Naive thymus-derived CD4-positive, alpha-beta T cell (primary cell): ENCODE measurements at regions of chr12 and their contacts with region 1.

Region 1: DNA sequence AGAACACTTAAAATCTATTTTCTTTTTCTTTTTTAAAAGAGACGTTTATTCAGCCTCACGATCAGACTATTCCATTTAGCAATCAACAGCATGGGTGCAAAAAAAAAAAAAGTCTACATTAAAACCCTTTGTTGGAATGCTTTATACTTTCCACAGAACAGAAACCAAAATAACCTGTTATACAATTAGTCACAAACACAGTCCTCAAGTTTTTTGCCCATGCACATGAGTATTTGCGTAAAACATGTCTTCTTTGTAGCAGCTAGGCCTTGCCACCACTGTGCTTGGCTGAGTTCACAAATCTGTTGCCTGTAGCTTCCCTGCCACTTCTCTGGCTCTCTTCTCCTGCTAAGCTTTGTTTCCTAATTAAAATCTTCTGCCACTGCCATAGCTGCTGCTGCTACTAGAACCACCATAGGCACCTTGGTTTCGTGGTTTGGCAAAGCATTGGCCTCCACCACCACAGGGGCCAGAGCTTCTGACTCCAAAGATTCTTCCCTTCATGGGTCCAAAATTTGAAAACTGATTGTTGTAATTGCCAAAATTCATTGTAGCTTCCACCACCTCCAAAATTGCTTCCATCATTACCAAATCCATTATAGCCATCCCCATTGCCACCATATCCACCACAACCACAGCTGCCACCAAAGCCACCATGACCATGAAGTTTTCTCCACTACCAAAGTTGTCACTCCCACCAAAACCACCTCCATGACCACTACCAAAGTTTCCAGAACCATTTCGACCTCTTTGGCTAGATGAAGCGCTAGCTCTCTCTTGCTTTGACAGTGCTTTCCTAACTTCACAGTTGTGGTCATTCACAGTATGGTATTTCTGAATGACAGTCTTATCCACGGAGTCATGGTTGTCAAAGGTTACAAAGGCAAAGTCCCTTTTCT is 38.1 kb downstream of the KLRG1 start:
- DNase-seq: peak in 1 of 9 donors; percentile 46
- ATAC-seq: no peak
- H3K4me3 ChIP-seq: no peak overlapping the region
- H3K4me3 Mint-ChIP-seq: peak overlapping the region; percentile 21 to 69 (median 60)
- H3K27ac ChIP-seq: peak overlapping the region; percentile 73
- H3K27ac Mint-ChIP-seq: peak overlapping the region in 3 of 9 donors; percentile 24 to 97 (median 94)
- H3K4me1 ChIP-seq: peaks cover 53 to 69% of the 10 kb centered on the region in 2 donors
- H3K4me1 Mint-ChIP-seq: peaks cover 20 to 57% (median 49%) of the 10 kb centered on the region in 7 donors
- H3K27me3 ChIP-seq: no peaks in the 10 kb centered on the region
- H3K27me3 Mint-ChIP-seq: peaks cover 0 to 2% (median 0%) of the 10 kb centered on the region in 5 donors

Region 2: DNA sequence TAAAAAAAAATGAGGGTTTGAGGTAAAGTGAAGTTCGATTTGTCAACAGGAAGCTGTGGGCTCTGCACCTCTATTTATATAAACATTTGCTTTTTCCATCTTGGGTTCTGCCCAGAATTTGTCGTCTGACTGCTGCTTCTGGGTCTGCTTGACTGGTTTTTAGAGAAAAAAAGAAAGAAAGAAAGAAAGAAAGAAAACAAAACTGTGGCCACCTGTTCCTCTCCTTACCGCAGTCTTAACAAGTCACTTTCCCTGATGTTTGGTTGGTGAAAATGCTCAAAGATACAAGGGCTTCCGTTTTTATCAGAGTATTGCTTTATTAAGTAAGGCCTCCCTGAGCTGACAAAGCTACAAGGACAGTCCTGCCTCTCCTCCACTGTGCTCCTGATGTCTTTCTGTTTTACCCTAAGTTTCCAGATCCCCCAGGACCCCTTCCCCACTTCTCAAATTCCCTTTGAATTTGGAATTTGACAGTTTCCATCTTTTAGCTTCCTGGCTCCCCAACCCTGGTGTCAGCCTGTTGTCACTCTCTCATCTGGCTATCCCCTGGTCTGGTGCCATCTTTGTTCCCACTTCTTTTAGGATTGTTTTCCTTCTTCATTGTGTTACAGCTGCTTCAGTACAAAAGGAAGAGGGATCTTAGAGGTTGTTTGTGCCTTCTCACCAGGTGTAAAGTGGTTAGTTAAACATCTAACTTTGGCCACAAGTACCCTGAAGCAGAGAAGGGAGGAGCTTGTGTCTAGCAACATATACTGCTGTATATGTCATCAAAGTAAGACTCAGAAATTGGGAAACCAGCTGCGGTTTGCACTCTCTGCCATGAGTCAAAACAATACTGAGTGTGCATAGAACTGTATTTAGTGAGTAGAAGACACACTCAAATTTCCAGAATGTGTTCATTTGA is 382.8 kb before region 1 on chr12:
- CTCF ChIA-PET with region 1: no interaction called
- POLR2A ChIA-PET with region 1: no interaction called
- intact Hi-C with region 1: loop called in 1 of 2 experiments (anchors 5 kb)
- DNase-seq: peak in 7 of 9 donors; percentile 11 to 51 (median 31)
- ATAC-seq: peak; percentile 84
- H3K4me3 ChIP-seq: peak overlapping the region; percentile 34
- H3K4me3 Mint-ChIP-seq: peak overlapping the region; percentile 49 to 88 (median 74)
- H3K27ac ChIP-seq: peak overlapping the region; percentile 61
- H3K27ac Mint-ChIP-seq: peak overlapping the region; percentile 90 to 95 (median 94)
- H3K4me1 ChIP-seq: peaks cover 22 to 33% of the 10 kb centered on the region in 2 donors
- H3K4me1 Mint-ChIP-seq: peaks cover 15 to 45% (median 26%) of the 10 kb centered on the region in 7 donors
- H3K27me3 ChIP-seq: no peaks in the 10 kb centered on the region
- H3K27me3 Mint-ChIP-seq: peaks cover 0 to 67% (median 0%) of the 10 kb centered on the region in 5 donors

Region 3: GRCh38 chr12:8989413-8989812 is 38.0 kb before region 1 on chr12 and contains the start of gene KLRG1:
- CTCF ChIA-PET with region 1: interaction called, 3 read pairs
- POLR2A ChIA-PET with region 1: interaction called, 9 read pairs
- intact Hi-C with region 1: loop called (anchors 1 to 2 kb)
- DNase-seq: peak in 2 of 9 donors; percentile 11 to 14
- ATAC-seq: peak; percentile 72
- H3K4me3 ChIP-seq: peak within 1 kb of the TSS; percentile 37
- H3K4me3 Mint-ChIP-seq: peak within 1 kb of the TSS; percentile 12 to 90 (median 77)
- H3K27ac ChIP-seq: peak within 1 kb of the TSS; percentile 27
- H3K27ac Mint-ChIP-seq: peak within 1 kb of the TSS in 8 of 9 donors; percentile 53 to 95 (median 84)
- H3K4me1 ChIP-seq: peaks cover 40 to 58% of the 10 kb centered on the region in 2 donors
- H3K4me1 Mint-ChIP-seq: peaks cover 34 to 78% (median 66%) of the 10 kb centered on the region in 7 donors
- H3K27me3 ChIP-seq: no peaks in the 10 kb centered on the region
- H3K27me3 Mint-ChIP-seq: no peaks in the 10 kb centered on the region
- total RNA-seq, gene KLRG1: 2.8 to 43.8 (median 26.9) TPM

Region 4: GRCh38 chr12:8996682-8997360 is 30.6 kb before region 1 on chr12:
- CTCF ChIA-PET with region 1: interaction called, 3 read pairs
- POLR2A ChIA-PET with region 1: interaction called, 7 read pairs
- intact Hi-C with region 1: loop called (anchors 1 kb)
- DNase-seq: peak in 1 of 9 donors; percentile 28
- ATAC-seq: peak; percentile 65
- H3K4me3 ChIP-seq: peak overlapping the region; percentile 25
- H3K4me3 Mint-ChIP-seq: peak overlapping the region in 7 of 10 donors; percentile 11 to 77 (median 27)
- H3K27ac ChIP-seq: no peak overlapping the region
- H3K27ac Mint-ChIP-seq: peak overlapping the region in 8 of 9 donors; percentile 1 to 87 (median 60)
- H3K4me1 ChIP-seq: peaks cover 35 to 44% of the 10 kb centered on the region in 2 donors
- H3K4me1 Mint-ChIP-seq: peaks cover 21 to 81% (median 62%) of the 10 kb centered on the region in 7 donors
- H3K27me3 ChIP-seq: no peaks in the 10 kb centered on the region
- H3K27me3 Mint-ChIP-seq: peaks cover 0 to 3% (median 0%) of the 10 kb centered on the region in 5 donors